ENCODE measurements at regions of chr5 and their contacts with region 1.

Region 1: GRCh38 chr5:36744773-36745589 is 131.6 kb upstream of the NIPBL start:
- DNase-seq: peak; percentile 68
- H3K4me3 ChIP-seq: peak overlapping the region in 2 of 3 experiments; percentile 39 to 59
- H3K27ac ChIP-seq: no peak overlapping the region
- H3K4me1 ChIP-seq: peaks cover 4% of the 10 kb centered on the region
- H3K27me3 ChIP-seq: peaks cover 25 to 34% of the 10 kb centered on the region in 2 experiments
- CTCF ChIP-seq: no peak
- POLR2A ChIP-seq: no peak

Region 2: GRCh38 chr5:36728697-36729543 is 16.1 kb before region 1 on chr5:
- CTCF ChIA-PET with region 1: interaction called, 36 read pairs
- POLR2A ChIA-PET with region 1: no interaction called
- dilution Hi-C with region 1: no loop called
- intact Hi-C with region 1: no loop called
- DNase-seq: peak; percentile 68
- H3K4me3 ChIP-seq: no peak overlapping the region
- H3K27ac ChIP-seq: no peak overlapping the region
- H3K4me1 ChIP-seq: no peaks in the 10 kb centered on the region
- H3K27me3 ChIP-seq: peaks cover 0 to 3% of the 10 kb centered on the region in 2 experiments
- CTCF ChIP-seq: peak; percentile 38 to 52
- POLR2A ChIP-seq: no peak

Region 3: GRCh38 chr5:36870399-36871040 is 125.5 kb after region 1 on chr5:
- CTCF ChIA-PET with region 1: interaction called, 20 read pairs
- POLR2A ChIA-PET with region 1: no interaction called
- dilution Hi-C with region 1: no loop called
- intact Hi-C with region 1: loop called (anchors 1 kb)
- DNase-seq: peak; percentile 58
- H3K4me3 ChIP-seq: no peak overlapping the region
- H3K27ac ChIP-seq: no peak overlapping the region
- H3K4me1 ChIP-seq: peaks cover 17% of the 10 kb centered on the region
- H3K27me3 ChIP-seq: no peaks in the 10 kb centered on the region
- CTCF ChIP-seq: peak; percentile 37 to 40
- POLR2A ChIP-seq: no peak

Region 4: DNA sequence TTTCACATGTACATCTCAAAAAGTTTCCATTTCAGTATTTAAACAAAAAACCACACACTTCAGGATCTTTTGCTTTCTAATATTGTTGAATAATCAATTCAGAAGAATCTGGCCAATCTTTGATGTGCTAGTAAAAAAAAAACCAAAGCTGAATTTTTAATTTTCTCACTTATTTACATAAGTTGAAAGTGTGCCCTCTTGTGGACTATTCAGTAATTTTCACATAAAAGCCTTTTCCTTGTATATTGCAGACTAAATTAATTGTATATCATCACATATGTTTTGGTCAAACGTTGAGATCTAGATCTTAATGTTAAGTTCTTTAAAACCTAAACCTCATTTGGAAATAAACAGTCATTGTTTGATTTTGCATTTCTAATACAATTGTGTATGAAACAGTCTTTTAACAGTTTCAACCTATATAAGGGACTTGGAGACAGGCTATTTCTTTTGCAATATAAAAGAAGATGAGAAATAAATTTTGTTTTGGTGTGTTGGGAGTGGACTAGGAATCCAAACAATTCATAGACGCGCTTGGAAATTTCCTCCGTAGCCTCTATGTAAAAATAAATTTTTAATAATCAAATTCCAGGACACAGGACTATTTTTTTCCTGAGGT is 199.7 kb after region 1 on chr5:
- CTCF ChIA-PET with region 1: interaction called, 10 read pairs
- POLR2A ChIA-PET with region 1: no interaction called
- dilution Hi-C with region 1: no loop called
- intact Hi-C with region 1: loop called (anchors 2 kb)
- DNase-seq: peak; percentile 69
- H3K4me3 ChIP-seq: no peak overlapping the region
- H3K27ac ChIP-seq: no peak overlapping the region
- H3K4me1 ChIP-seq: peaks cover 16% of the 10 kb centered on the region
- H3K27me3 ChIP-seq: no peaks in the 10 kb centered on the region
- CTCF ChIP-seq: peak; percentile 23 to 34
- POLR2A ChIP-seq: no peak

Region 5: GRCh38 chr5:37133939-37134338 is 389.0 kb after region 1 on chr5:
- CTCF ChIA-PET with region 1: no interaction called
- POLR2A ChIA-PET with region 1: no interaction called
- dilution Hi-C with region 1: no loop called
- intact Hi-C with region 1: no loop called
- DNase-seq: peak; percentile 29
- H3K4me3 ChIP-seq: no peak overlapping the region
- H3K27ac ChIP-seq: no peak overlapping the region
- H3K4me1 ChIP-seq: no peaks in the 10 kb centered on the region
- H3K27me3 ChIP-seq: no peaks in the 10 kb centered on the region
- CTCF ChIP-seq: no peak
- POLR2A ChIP-seq: no peak